ENCODE measurements at regions of chr9 and their contacts with region 1.

Region 1: DNA sequence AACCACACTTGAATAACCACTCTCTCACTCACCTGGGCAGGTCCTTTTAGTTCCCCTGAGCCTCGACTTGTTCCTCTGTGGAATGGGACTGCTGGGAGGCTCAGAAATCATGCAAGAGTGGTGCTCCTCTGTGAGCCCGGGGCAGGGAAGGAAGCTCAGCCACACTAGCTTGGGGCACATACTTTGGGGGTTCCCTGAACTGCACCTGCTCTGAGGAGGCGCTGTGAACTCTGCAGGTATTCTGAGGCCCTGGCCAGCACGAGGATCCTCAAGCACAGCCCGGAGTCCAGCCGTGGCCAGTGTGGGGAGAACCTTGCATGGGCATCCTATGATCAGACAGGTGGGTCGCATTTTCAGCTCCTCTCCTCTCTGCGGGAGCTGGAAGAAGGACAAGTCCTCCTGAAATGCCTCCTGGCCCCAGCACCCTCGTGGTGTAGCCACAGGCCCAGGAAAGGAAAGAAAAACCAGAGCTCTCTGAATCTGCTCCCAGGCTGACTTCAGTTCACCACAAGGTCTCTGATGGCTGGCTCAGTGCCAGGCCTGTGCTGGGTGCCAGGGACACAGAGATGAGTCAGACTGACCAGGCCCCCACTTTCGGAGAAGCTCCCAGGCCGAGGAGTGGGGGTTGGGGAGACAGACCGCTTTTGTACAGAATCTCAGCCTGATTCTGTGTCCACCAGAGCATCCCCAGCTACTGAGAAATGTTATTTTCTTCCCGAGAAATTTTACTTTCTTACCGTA is 11.9 kb downstream of the GLIPR2 start:
- DNase-seq: no peak
- ATAC-seq: no peak
- H3K4me3 Mint-ChIP-seq: no peak overlapping the region
- H3K27ac Mint-ChIP-seq: no peak overlapping the region
- H3K4me1 Mint-ChIP-seq: peaks cover 81% of the 10 kb centered on the region
- H3K27me3 Mint-ChIP-seq: no peaks in the 10 kb centered on the region
- CTCF ChIP-seq: no peak

Region 2: GRCh38 chr9:36074870-36075532 is 73.5 kb before region 1 on chr9:
- CTCF ChIA-PET with region 1: no interaction called
- POLR2A ChIA-PET with region 1: no interaction called
- intact Hi-C with region 1: no loop called
- DNase-seq: no peak
- ATAC-seq: no peak
- H3K4me3 Mint-ChIP-seq: no peak overlapping the region
- H3K27ac Mint-ChIP-seq: no peak overlapping the region
- H3K4me1 Mint-ChIP-seq: no peaks in the 10 kb centered on the region
- H3K27me3 Mint-ChIP-seq: no peaks in the 10 kb centered on the region
- CTCF ChIP-seq: no peak

Region 3: DNA sequence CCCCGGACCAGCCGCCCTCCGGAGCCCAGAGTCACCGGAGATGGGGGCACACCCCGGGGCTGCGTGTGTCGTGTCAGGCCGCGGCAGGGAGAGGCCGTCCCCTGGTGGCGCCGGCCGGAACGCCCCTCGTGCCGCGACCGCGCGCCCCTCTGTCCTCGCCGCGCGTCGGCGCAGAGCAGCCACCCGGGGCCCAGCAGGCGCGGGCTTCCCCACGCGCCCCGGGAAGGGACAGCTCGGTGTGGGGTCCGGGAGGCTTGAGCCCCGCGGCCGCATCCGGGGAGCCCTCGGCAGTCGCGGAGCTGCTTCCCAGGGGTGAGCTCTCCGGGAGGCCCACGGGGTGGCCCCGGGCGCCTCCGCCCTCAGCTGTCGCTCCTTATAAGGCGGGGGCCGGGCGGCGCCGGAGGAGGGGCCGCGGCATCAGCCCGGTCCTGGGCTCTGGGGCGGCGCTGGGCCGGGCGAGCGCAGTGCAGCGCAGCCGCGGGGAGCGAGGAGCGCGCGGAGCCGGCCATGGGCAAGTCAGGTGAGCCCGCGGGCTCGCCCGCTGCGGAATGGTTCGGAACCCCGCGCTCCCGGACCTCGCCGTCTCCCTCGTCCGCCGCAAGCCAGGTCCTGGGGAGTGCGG is 12.1 kb before region 1 on chr9 and contains the start of gene GLIPR2:
- CTCF ChIA-PET with region 1: no interaction called
- POLR2A ChIA-PET with region 1: interaction called, 33 read pairs
- intact Hi-C with region 1: loop called (anchors 1 kb)
- DNase-seq: peak; percentile 79
- ATAC-seq: peak; percentile 98
- H3K4me3 Mint-ChIP-seq: peak within 1 kb of the TSS; percentile 87
- H3K27ac Mint-ChIP-seq: peak within 1 kb of the TSS; percentile 88
- H3K4me1 Mint-ChIP-seq: peaks cover 53% of the 10 kb centered on the region
- H3K27me3 Mint-ChIP-seq: no peaks in the 10 kb centered on the region
- CTCF ChIP-seq: no peak
- total RNA-seq, gene GLIPR2: 13.6 and 14.3 TPM in 2 replicates

Region 4: GRCh38 chr9:36208521-36209253 is 60.2 kb after region 1 on chr9:
- CTCF ChIA-PET with region 1: no interaction called
- POLR2A ChIA-PET with region 1: no interaction called
- intact Hi-C with region 1: no loop called
- DNase-seq: no peak
- ATAC-seq: no peak
- H3K4me3 Mint-ChIP-seq: no peak overlapping the region
- H3K27ac Mint-ChIP-seq: no peak overlapping the region
- H3K4me1 Mint-ChIP-seq: no peaks in the 10 kb centered on the region
- H3K27me3 Mint-ChIP-seq: no peaks in the 10 kb centered on the region
- CTCF ChIP-seq: no peak

Region 5: DNA sequence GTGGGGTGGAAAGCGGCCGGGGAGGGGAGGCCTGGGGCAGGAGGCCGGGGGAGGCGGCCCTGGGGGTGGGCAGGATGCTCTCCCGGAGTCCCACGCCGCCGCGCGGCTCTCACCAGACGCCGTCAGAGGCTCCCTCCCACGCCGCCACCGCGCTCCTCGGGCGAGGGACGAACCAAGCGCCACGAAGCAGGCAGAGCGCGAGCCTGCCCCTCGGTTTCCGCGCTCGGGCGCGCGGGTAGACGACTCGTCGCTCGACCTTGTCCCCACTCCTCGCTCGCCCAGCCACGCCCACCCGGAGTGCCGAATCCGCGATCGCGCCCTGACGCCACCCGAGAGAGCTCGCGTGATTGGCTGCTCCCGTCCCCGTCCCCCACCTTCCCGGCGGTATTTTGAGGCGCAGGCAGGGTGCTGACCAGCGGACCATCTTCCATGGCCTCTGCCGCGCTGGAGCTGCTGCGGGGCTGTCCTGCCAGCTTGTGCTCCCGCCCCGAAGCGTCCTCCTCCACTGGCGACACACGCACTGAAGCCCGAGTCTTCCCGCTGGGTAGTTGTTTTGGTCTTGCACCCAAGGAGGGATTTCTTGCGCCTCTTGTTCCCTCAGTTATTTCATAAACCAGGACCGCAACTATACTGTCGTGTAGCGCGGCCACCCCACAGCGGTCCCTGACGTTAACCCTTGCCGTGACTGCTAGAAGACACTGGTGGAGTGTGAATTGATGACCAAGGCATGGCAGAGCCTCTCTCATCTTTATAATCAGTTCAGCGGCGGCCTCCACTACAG is 109.9 kb after region 1 on chr9 and contains the start of gene GNE:
- CTCF ChIA-PET with region 1: no interaction called
- POLR2A ChIA-PET with region 1: no interaction called
- intact Hi-C with region 1: loop called (anchors 5 kb)
- DNase-seq: peak; percentile 97
- ATAC-seq: peak; percentile 80
- H3K4me3 Mint-ChIP-seq: peak within 1 kb of the TSS; percentile 95
- H3K27ac Mint-ChIP-seq: peak within 1 kb of the TSS; percentile 92
- H3K4me1 Mint-ChIP-seq: peaks cover 16% of the 10 kb centered on the region
- H3K27me3 Mint-ChIP-seq: no peaks in the 10 kb centered on the region
- CTCF ChIP-seq: no peak
- total RNA-seq, gene GNE: 18.1 and 19.3 TPM in 2 replicates

Region 6: GRCh38 chr9:36292631-36293030 is 144.2 kb after region 1 on chr9:
- CTCF ChIA-PET with region 1: no interaction called
- POLR2A ChIA-PET with region 1: no interaction called
- intact Hi-C with region 1: no loop called
- DNase-seq: no peak
- ATAC-seq: no peak
- H3K4me3 Mint-ChIP-seq: no peak overlapping the region
- H3K27ac Mint-ChIP-seq: no peak overlapping the region
- H3K4me1 Mint-ChIP-seq: no peaks in the 10 kb centered on the region
- H3K27me3 Mint-ChIP-seq: no peaks in the 10 kb centered on the region
- CTCF ChIP-seq: no peak